H1 (cell line): ENCODE measurements at regions of chr20 and their contacts with region 1.

Region 1: DNA sequence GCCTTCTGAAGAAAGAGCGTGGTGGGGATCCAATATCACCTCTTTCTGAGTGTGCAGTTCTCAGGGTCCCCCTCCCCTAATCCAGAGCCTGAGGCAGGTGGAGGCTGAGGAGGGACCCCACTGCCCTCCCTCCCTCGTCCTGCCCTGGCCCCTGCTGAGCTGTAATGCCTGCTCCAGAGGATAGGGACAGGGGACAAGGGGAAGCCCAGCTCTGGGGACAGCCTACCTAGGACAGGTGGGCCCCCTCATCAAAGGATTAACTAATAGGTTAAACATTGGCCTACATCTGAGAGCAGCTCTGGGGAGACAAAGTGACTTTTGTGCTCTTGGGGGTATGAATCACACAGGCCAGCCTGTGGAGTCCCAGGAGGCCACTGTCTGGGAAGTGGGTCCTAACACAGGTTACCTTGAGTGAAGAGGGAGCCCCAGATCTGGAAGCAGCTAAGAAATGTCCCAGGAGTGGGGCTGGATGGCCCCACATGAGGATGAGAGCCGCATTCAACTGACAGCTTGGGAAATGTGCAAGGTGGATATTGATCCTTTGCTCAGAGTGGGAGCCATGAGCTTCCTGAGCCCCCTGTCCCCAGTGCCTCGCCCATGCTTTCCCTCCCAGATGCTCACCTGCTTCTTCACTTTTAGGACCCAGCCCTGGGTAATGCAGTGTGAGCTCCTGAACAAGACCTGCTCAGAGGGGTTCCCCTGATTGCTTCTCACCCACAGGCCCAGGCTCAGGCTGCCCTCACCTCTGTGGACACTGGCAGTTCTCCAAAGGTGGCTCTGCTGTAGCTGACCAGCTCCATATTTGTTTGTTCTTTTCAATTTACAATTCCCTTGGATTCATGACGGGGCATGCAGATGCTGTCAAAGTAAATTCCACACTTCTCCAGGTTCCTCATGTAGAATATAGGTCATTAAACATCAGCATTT is 17.8 kb upstream of the CST9L start:
- DNase-seq: peak in 1 of 2 experiments; percentile 37
- H3K4me3 ChIP-seq: no peak overlapping the region
- H3K27ac ChIP-seq: no peak overlapping the region
- H3K4me1 ChIP-seq: peaks cover 0 to 2% (median 0%) of the 10 kb centered on the region in 4 experiments; a peak in 1 of 7 replicates
- H3K27me3 ChIP-seq: no peaks in the 10 kb centered on the region; a peak in 1 of 7 replicates
- CTCF ChIP-seq: no peak
- EP300 ChIP-seq: no peak
- POLR2A ChIP-seq: no peak
- RAD21 ChIP-seq: no peak

Region 2: DNA sequence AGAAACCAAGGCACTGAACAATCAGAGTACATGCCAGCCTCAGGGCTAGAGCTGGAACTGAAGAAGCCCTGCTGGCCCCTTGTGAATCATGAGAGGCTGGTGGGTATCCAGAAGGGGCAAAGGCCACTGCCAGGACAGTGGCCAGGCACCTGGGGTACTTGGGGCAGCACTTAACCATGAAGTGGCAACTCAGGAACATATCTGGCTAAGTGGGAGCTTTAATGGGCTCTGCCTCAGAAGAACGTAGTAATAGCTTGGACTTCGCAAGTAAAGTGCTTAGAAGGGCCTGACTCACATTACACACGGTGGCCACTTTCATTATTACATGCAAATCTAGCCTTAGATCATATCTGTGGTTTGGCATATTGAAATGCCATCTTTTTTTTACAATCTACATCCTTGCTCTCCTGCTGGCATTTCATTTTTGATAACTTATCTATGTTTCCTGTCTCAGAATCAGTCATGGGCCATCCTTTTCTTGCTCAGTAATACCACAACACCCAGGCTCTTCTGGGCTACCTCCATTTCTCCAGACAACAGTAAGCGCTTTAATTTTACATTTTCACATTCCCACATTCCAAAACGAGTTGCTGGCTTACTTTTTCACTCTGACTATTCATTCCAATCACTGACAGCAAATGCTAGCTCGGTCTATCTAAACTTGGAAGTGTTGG is 186.4 kb before region 1 on chr20:
- CTCF ChIA-PET with region 1: no interaction called
- POLR2A ChIA-PET with region 1: no interaction called
- DNase-seq: no peak
- H3K4me3 ChIP-seq: no peak overlapping the region
- H3K27ac ChIP-seq: no peak overlapping the region
- H3K4me1 ChIP-seq: peaks cover 0 to 2% (median 0%) of the 10 kb centered on the region in 4 experiments; a peak in 1 of 7 replicates
- H3K27me3 ChIP-seq: no peaks in the 10 kb centered on the region
- CTCF ChIP-seq: no peak
- EP300 ChIP-seq: no peak
- POLR2A ChIP-seq: no peak
- RAD21 ChIP-seq: no peak

Region 3: DNA sequence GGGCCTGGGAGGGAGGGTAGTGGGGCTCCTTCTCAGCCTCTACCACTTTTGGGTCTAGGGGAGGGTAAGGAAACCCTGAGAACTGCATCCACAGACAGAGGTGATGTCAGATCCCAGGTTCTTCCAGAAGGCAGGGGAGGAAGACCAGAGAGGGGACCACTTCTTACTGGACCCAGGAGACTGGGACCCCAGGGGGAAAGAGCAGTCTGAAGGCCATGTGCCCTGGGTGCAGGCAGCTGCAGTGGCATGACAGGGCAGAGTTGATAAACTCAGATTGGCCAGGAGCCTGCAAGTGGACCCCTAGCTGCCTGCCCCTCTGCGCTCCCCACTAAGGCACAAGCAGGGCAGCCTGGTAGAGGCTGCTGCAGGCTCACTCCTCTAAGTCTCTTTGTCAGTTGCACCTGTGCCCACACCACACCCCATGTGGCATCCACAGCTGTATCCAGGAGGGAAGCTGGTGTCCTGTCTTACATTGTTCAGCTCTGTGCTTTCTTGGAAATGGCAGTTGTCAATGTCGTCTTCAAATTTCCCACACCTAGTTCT is 20.5 kb before region 1 on chr20:
- CTCF ChIA-PET with region 1: interaction called, 32 read pairs
- POLR2A ChIA-PET with region 1: no interaction called
- DNase-seq: no peak
- H3K4me3 ChIP-seq: no peak overlapping the region
- H3K27ac ChIP-seq: no peak overlapping the region
- H3K4me1 ChIP-seq: no peaks in the 10 kb centered on the region; a peak in 1 of 7 replicates
- H3K27me3 ChIP-seq: no peaks in the 10 kb centered on the region
- CTCF ChIP-seq: no peak
- EP300 ChIP-seq: no peak
- POLR2A ChIP-seq: no peak
- RAD21 ChIP-seq: no peak

Region 4: DNA sequence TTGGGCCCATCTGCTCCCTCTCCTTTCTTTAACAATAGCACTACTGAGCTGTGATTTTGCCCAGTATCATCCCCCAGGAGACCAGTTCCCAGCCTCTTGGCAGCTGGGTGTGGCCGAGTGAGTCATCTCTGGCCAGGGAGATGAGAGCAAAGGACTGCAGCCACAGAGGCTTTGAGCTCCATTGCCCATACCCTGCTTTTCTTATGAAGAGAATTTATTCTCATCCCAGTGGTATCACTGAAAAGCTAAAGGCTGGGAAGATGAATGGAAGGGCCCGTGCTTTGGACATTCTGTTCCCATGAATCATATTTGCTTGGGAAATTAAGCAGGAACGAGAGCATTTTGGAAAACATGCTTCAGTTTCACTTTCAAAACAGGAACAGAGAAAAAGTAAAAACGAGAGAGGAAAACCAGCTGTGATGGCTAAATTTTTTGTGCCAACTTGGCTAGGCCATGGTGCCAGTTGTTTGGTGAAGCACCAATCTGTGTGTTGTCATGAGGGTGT is 36.8 kb after region 1 on chr20:
- CTCF ChIA-PET with region 1: no interaction called
- POLR2A ChIA-PET with region 1: no interaction called
- DNase-seq: no peak
- H3K4me3 ChIP-seq: no peak overlapping the region
- H3K27ac ChIP-seq: no peak overlapping the region
- H3K4me1 ChIP-seq: peaks cover 0 to 4% (median 2%) of the 10 kb centered on the region in 4 experiments; a peak in 3 of 7 replicates
- H3K27me3 ChIP-seq: no peaks in the 10 kb centered on the region
- CTCF ChIP-seq: no peak
- EP300 ChIP-seq: no peak
- POLR2A ChIP-seq: no peak
- RAD21 ChIP-seq: no peak